Cardiac septum (tissue), 1 donor: ENCODE measurements at regions of chr20 and their contacts with region 1.

Region 1: GRCh38 chr20:32474967-32475811 is 109.9 kb downstream of the NOL4L start:
- DNase-seq: peak; percentile 94

Region 2: GRCh38 chr20:32433311-32434021 is 41.7 kb before region 1 on chr20:
- intact Hi-C with region 1: loop called (anchors 5 kb)
- DNase-seq: no peak

Region 3: DNA sequence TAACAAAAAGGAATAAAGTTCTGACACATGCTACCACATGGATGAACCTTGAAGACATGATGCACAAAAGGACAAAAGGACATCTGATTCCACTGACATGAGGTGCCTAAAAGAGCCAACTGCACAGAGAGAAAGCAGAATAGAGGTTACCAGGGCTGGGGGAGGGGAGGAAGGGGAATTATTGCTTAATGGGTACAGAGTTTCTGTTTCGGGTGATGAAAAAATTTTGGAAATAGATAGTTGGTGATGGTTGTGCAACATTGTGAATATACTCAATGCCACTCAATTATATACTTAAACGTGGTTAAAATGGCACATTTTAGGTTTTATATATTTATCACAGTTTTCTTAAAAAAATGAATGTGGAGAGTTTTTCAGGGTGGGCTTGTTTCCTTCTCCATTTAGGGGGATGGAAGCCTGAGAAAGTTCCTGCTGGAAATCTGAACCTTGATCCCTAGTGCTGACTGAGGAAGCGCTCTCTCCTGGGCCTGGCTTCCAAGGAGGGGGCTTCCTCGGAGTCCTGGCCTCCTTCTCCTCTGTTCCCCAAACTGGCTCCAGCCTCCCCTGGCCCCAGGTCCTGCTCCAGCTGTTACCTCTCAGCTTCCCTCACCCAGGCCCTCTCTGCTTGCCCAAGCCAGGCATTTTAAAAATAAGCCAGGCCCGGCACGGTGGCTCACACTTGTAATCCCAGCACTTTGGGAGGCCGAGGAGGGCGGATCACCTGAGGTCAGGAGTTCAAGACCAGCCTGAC is 30.7 kb after region 1 on chr20:
- intact Hi-C with region 1: no loop called
- DNase-seq: no peak

Region 4: DNA sequence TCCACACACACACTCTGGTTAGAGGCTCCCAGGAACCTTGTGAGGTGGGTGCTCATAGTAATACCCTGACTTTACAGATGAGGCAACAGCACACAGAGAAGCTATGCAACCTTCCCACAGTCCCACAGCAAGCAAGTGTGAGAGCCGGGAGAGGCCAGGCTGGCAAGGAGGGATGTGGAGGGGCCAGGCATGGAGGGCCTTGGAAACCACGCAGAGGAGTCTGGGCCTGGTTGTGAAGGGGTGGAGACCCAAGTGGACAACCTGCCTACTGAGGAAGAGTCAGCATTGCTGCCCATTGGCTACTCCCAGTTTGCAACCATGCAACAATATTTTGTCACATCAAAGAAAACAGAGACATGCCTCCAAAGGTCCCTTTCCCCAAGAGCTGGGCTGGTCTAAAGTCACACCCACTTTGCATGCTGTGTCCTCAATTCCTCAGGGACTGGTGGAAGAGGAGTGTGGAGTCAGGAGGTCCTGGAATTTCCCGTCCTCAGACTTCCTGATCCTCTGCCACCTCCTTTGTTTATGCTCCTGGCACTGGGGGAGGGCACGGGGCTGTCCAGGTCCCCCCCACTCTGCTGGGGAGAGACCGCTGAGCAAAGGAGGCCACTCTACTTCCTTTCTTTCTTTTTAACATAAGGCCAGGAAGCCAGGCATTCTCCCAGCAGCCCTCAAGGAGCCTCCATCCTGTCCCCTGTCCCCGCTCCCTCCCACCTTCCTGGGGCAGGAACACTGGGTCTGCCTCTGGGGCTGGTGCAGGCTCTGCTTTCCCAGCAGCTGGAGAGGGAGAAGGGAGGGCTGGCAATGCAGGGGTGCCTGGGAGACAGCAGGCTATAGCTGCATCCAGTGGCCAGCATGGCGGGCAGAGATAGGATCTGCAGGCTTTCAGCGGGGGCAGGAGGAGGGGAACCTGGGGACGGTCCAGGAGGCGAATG is 41.7 kb after region 1 on chr20:
- intact Hi-C with region 1: loop called (anchors 5 kb)
- DNase-seq: no peak

Region 5: GRCh38 chr20:32546918-32547752 is 71.9 kb after region 1 on chr20:
- intact Hi-C with region 1: no loop called
- DNase-seq: no peak